ENCODE measurements at regions of chr1 and their contacts with region 1.

Region 1: DNA sequence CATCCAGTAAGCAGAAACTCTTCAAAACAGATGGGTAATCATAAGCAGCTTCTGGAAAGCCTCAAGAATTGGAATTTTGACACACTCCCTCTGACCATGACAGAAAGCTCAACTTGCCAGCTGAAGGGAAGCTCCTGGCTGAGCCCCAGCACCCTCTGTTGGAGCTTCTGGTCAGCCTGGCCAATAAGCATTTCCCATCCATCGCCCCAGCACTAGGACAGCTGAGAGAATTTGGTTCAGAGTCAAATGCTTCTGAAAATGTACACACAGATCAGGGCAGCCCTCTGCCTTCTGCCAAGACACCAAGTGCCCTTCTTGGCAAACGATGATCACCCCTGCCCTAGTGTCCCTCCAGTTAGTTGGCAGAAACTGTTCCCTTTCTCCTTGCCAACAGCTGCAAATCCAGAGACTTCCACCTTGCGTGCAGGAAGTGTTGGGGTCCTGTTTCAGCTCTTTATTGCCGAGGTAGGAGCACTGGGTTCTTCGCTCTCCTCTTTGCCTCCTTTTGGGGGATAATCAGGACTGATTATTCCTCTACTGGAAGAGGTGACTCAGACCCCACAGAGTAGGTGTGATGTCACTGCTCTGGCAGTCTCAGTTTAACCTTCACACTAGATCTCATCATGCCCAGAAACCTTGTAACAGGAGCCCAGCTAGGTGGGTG is 11.9 kb downstream of the PIGV start:
- DNase-seq: peak in 1 of 5 donors; percentile 55
- H3K4me3 ChIP-seq: peak overlapping the region; percentile 10
- H3K4me3 Mint-ChIP-seq: peak overlapping the region; percentile 4 to 83 (median 77)
- H3K27ac ChIP-seq: peak overlapping the region; percentile 65
- H3K27ac Mint-ChIP-seq: peak overlapping the region; percentile 94 to 98 (median 97)
- H3K4me1 ChIP-seq: peaks cover 37% of the 10 kb centered on the region
- H3K4me1 Mint-ChIP-seq: peaks cover 38 to 59% (median 55%) of the 10 kb centered on the region in 3 donors
- H3K27me3 ChIP-seq: no peaks in the 10 kb centered on the region
- H3K27me3 Mint-ChIP-seq: no peaks in the 10 kb centered on the region

Region 2: DNA sequence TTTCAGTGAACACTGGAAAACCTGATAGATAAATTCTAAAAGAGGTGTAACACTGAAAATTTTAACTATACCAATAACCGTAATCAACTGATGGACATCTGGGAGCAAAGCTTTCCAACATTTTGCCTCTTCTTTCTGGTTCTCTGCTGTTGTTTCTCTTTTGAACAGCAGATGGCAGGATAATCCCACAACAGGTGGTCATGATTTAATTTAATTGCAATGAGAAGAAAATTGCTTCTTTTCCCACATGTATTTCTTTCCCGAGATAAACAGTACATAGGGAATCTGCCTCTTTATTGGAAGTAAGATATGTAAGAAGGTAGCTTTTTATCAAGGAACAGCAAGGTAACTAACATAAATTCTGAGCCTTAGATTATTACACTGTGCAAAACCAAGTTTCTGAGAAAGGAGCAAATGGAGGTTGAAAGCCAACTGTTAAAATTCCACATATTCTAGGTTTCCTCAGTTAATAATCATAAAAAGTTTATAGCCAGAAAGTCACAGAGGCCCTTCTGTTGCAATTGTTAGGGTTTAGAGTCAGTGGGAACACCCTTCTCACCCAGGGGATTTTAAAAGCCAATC is 197.1 kb before region 1 on chr1:
- CTCF ChIA-PET with region 1: interaction called, 18 read pairs
- POLR2A ChIA-PET with region 1: interaction called, 4 read pairs
- DNase-seq: peak in 3 of 5 donors; percentile 30 to 61 (median 56)
- H3K4me3 ChIP-seq: no peak overlapping the region
- H3K4me3 Mint-ChIP-seq: no peak overlapping the region
- H3K27ac ChIP-seq: no peak overlapping the region
- H3K27ac Mint-ChIP-seq: no peak overlapping the region
- H3K4me1 ChIP-seq: peaks cover 8% of the 10 kb centered on the region
- H3K4me1 Mint-ChIP-seq: peaks cover 7 to 10% (median 9%) of the 10 kb centered on the region in 3 donors
- H3K27me3 ChIP-seq: no peaks in the 10 kb centered on the region
- H3K27me3 Mint-ChIP-seq: peaks cover 0 to 2% of the 10 kb centered on the region in 2 donors

Region 3: GRCh38 chr1:26703478-26703877 is 96.1 kb before region 1 on chr1:
- CTCF ChIA-PET with region 1: no interaction called
- POLR2A ChIA-PET with region 1: no interaction called
- DNase-seq: no peak
- H3K4me3 ChIP-seq: no peak overlapping the region
- H3K4me3 Mint-ChIP-seq: peak overlapping the region in 1 of 7 donors; percentile 25
- H3K27ac ChIP-seq: no peak overlapping the region
- H3K27ac Mint-ChIP-seq: peak overlapping the region in 4 of 8 donors; percentile 4 to 72 (median 22)
- H3K4me1 ChIP-seq: peaks cover 90% of the 10 kb centered on the region
- H3K4me1 Mint-ChIP-seq: peaks cover 0 to 29% (median 28%) of the 10 kb centered on the region in 3 donors
- H3K27me3 ChIP-seq: no peaks in the 10 kb centered on the region
- H3K27me3 Mint-ChIP-seq: no peaks in the 10 kb centered on the region

Region 4: GRCh38 chr1:26820784-26821269 is 21.2 kb after region 1 on chr1:
- CTCF ChIA-PET with region 1: interaction called, 8 read pairs
- POLR2A ChIA-PET with region 1: interaction called, 13 read pairs
- DNase-seq: peak in 2 of 5 donors; percentile 53 to 61
- H3K4me3 ChIP-seq: peak overlapping the region; percentile 26
- H3K4me3 Mint-ChIP-seq: peak overlapping the region; percentile 81 to 88 (median 84)
- H3K27ac ChIP-seq: no peak overlapping the region
- H3K27ac Mint-ChIP-seq: peak overlapping the region; percentile 87 to 95 (median 91)
- H3K4me1 ChIP-seq: peaks cover 22% of the 10 kb centered on the region
- H3K4me1 Mint-ChIP-seq: peaks cover 14 to 36% (median 25%) of the 10 kb centered on the region in 3 donors
- H3K27me3 ChIP-seq: no peaks in the 10 kb centered on the region
- H3K27me3 Mint-ChIP-seq: no peaks in the 10 kb centered on the region

Region 5: DNA sequence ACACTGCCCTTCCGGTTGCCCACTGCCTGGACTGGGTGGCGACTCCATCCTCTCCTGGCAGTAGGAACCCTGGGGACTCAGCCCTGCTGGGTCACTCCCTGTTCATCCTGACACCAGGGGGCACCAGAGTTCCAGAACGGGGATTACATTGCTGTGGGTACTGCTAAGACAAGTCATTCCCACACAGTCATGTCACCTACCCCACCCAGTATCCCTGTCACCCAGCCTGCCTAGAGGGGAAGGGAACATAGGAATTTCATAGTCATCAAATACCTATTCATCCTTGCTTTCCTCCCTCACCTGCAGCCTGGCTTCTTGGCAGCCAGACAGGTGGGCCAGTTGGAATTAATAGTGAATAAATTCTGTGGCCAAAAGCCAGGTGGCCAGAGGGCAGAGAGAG is 53.5 kb after region 1 on chr1:
- CTCF ChIA-PET with region 1: no interaction called
- POLR2A ChIA-PET with region 1: no interaction called
- DNase-seq: peak; percentile 56 to 85 (median 66)
- H3K4me3 ChIP-seq: no peak overlapping the region
- H3K4me3 Mint-ChIP-seq: no peak overlapping the region
- H3K27ac ChIP-seq: no peak overlapping the region
- H3K27ac Mint-ChIP-seq: peak overlapping the region in 4 of 8 donors; percentile 17 to 79 (median 68)
- H3K4me1 ChIP-seq: no peaks in the 10 kb centered on the region
- H3K4me1 Mint-ChIP-seq: peaks cover 0 to 4% (median 3%) of the 10 kb centered on the region in 3 donors
- H3K27me3 ChIP-seq: no peaks in the 10 kb centered on the region
- H3K27me3 Mint-ChIP-seq: peaks cover 0 to 3% of the 10 kb centered on the region in 2 donors

Region 6: DNA sequence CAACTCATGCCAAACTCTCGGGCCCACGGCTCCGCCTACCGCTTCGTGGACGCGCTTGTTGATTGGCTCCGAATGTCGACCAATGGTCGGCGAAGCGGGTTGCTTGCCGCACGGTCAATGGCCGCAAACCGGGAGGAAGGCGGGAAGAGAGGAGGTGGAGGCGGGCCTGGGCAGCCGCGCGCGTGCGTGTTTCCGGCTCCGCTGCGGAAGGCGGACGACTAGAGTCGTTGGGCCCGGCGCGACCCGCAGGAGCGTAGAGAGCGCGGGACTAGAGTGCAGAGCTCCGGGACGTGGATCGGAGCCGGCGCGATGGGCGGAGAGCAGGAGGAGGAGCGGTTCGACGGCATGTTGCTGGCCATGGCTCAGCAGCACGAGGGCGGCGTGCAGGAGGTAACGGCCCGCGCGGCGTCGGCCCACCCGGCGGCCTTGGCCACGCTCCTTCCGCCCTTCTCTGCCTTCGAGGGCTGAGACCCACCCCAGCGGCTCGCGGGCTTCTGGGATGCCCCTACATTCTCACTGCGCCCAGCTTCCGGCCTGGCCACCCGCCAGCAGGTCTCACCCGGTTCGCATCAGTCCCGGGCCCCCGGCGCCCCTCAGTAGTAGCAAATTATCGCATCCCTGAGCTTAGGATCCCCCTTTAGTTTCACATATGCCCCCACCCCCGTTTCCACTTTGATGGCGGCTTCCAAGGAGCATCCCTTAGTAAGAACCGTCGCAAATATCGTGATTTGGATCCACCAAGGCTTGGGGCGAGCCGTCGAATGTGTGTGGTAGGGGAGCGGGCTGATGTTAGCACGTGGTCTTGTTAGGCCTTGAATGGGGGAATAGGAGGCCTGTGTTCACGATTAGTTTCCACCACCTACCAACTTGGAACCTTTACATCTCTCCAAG is 122.2 kb after region 1 on chr1 and contains the start of gene NUDC:
- CTCF ChIA-PET with region 1: no interaction called
- POLR2A ChIA-PET with region 1: no interaction called
- DNase-seq: peak; percentile 93 to 97 (median 95)
- H3K4me3 ChIP-seq: peak within 1 kb of the TSS; percentile 77
- H3K4me3 Mint-ChIP-seq: peak within 1 kb of the TSS; percentile 87 to 97 (median 93)
- H3K27ac ChIP-seq: peak within 1 kb of the TSS; percentile 84
- H3K27ac Mint-ChIP-seq: peak within 1 kb of the TSS; percentile 87 to 98 (median 95)
- H3K4me1 ChIP-seq: peaks cover 22% of the 10 kb centered on the region
- H3K4me1 Mint-ChIP-seq: peaks cover 26 to 46% (median 40%) of the 10 kb centered on the region in 3 donors
- H3K27me3 ChIP-seq: no peaks in the 10 kb centered on the region
- H3K27me3 Mint-ChIP-seq: peaks cover 0 to 1% of the 10 kb centered on the region in 2 donors
- total RNA-seq, gene NUDC: 167 to 168 TPM

Region 7: GRCh38 chr1:27662707-27663393 is 863.2 kb after region 1 on chr1:
- CTCF ChIA-PET with region 1: no interaction called
- POLR2A ChIA-PET with region 1: no interaction called
- DNase-seq: peak; percentile 81 to 91 (median 85)
- H3K4me3 ChIP-seq: peak overlapping the region; percentile 74
- H3K4me3 Mint-ChIP-seq: peak overlapping the region; percentile 64 to 89 (median 86)
- H3K27ac ChIP-seq: peak overlapping the region; percentile 81
- H3K27ac Mint-ChIP-seq: peak overlapping the region; percentile 97 to 99 (median 98)
- H3K4me1 ChIP-seq: peaks cover 48% of the 10 kb centered on the region
- H3K4me1 Mint-ChIP-seq: peaks cover 46 to 49% (median 48%) of the 10 kb centered on the region in 3 donors
- H3K27me3 ChIP-seq: no peaks in the 10 kb centered on the region
- H3K27me3 Mint-ChIP-seq: no peaks in the 10 kb centered on the region

Measured in CD8-positive, alpha-beta memory T cell (primary cell).